IMR-90 (cell line): ENCODE measurements at regions of chr1 and their contacts with region 1.

Region 1: GRCh38 chr1:111553196-111553595 is 49.8 kb upstream of the ADORA3 start:
- DNase-seq: peak; percentile 89
- ATAC-seq: peak; percentile 81
- H3K4me3 ChIP-seq: no peak overlapping the region
- H3K27ac ChIP-seq: no peak overlapping the region
- H3K4me1 ChIP-seq: no peaks in the 10 kb centered on the region; the same call in 1 of the 2 replicates
- H3K27me3 ChIP-seq: no peaks in the 10 kb centered on the region
- CTCF ChIP-seq: no peak
- POLR2A ChIP-seq: no peak
- RAD21 ChIP-seq: no peak

Region 2: DNA sequence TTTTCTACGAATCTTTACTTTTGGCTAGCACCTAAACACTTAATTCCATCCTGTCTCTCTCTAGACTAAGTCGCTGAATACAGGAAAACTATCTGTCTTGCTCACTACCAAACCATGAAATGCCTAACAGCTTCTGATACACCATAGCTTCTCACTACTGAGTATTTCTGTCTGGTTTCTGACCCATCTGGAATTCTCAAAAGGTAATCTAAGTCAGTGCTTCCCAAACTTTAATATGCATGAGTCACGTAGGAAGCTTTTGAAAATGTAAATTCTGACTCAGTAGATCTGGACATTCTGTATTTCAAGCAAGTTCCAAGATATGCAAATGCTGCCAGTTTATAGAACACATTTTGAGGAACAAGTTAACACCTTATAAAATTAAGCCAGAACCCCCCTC is 116.5 kb before region 1 on chr1:
- CTCF ChIA-PET with region 1: no interaction called
- POLR2A ChIA-PET with region 1: no interaction called
- dilution Hi-C with region 1: no loop called
- in situ Hi-C with region 1: no loop called
- intact Hi-C with region 1: no loop called
- DNase-seq: peak; percentile 83
- ATAC-seq: peak; percentile 84
- H3K4me3 ChIP-seq: no peak overlapping the region
- H3K27ac ChIP-seq: peak overlapping the region; percentile 47; the same call in 1 of the 2 replicates
- H3K4me1 ChIP-seq: peaks cover 5% of the 10 kb centered on the region
- H3K27me3 ChIP-seq: no peaks in the 10 kb centered on the region
- CTCF ChIP-seq: no peak
- POLR2A ChIP-seq: no peak
- RAD21 ChIP-seq: no peak

Region 3: DNA sequence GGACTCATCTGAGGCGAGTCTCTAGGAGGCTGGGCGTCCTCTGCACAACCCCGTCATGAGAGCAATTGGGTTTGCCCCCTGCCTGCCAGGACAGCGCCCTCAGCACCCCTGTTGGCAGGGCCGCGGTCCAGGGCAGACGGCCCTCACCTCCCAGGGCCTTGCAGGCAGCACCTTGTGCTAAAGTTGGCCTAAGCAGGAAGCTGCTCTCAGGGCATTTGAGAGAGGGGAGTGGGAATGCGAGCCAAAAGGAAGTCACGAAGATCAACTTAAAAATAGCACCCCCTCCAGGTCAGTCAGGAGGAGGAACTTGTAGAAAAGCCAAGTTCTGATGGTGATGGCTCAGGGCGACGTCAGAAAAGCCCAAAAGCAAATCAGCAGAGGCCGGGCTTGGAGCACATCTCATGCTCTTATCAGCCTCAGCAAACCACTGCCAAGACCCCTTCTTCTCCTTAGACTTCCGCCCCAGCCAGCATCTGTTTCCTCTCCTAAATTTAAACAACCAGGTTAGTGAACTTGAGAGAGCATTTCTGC is 37.1 kb before region 1 on chr1:
- CTCF ChIA-PET with region 1: no interaction called
- POLR2A ChIA-PET with region 1: no interaction called
- dilution Hi-C with region 1: no loop called
- in situ Hi-C with region 1: no loop called
- intact Hi-C with region 1: loop called (anchors 5 kb)
- DNase-seq: peak; percentile 82
- ATAC-seq: peak; percentile 57
- H3K4me3 ChIP-seq: peak overlapping the region; percentile 18; the same call in 1 of the 2 replicates
- H3K27ac ChIP-seq: no peak overlapping the region; the same call in 1 of the 2 replicates
- H3K4me1 ChIP-seq: peaks cover 7% of the 10 kb centered on the region
- H3K27me3 ChIP-seq: no peaks in the 10 kb centered on the region
- CTCF ChIP-seq: peak; percentile 33
- POLR2A ChIP-seq: no peak
- RAD21 ChIP-seq: no peak

Region 4: DNA sequence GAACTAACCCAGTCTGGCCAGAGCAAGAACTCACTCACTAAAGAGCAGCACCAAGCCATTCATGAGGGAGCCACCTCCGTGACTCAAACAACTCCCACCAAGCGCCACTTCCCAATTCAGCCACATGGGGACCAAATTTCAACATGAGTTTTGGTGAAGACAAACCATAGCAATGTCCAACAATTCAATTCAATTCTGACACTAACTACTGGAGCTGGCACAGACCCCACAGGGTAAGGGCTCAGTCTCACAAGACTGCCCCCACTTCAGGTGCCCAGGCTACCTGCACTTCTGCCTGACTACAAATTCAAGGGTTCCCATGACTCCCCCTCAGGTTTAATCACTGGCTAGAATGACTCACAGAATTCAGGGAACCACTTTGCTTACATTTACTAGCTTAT is 17.6 kb after region 1 on chr1:
- CTCF ChIA-PET with region 1: no interaction called
- POLR2A ChIA-PET with region 1: no interaction called
- dilution Hi-C with region 1: no loop called
- in situ Hi-C with region 1: no loop called
- intact Hi-C with region 1: no loop called
- DNase-seq: peak; percentile 35
- ATAC-seq: no peak
- H3K4me3 ChIP-seq: no peak overlapping the region
- H3K27ac ChIP-seq: no peak overlapping the region
- H3K4me1 ChIP-seq: peaks cover 18% of the 10 kb centered on the region
- H3K27me3 ChIP-seq: no peaks in the 10 kb centered on the region
- CTCF ChIP-seq: peak; percentile 21; the same call in 1 of the 2 replicates
- POLR2A ChIP-seq: no peak
- RAD21 ChIP-seq: no peak

Region 5: DNA sequence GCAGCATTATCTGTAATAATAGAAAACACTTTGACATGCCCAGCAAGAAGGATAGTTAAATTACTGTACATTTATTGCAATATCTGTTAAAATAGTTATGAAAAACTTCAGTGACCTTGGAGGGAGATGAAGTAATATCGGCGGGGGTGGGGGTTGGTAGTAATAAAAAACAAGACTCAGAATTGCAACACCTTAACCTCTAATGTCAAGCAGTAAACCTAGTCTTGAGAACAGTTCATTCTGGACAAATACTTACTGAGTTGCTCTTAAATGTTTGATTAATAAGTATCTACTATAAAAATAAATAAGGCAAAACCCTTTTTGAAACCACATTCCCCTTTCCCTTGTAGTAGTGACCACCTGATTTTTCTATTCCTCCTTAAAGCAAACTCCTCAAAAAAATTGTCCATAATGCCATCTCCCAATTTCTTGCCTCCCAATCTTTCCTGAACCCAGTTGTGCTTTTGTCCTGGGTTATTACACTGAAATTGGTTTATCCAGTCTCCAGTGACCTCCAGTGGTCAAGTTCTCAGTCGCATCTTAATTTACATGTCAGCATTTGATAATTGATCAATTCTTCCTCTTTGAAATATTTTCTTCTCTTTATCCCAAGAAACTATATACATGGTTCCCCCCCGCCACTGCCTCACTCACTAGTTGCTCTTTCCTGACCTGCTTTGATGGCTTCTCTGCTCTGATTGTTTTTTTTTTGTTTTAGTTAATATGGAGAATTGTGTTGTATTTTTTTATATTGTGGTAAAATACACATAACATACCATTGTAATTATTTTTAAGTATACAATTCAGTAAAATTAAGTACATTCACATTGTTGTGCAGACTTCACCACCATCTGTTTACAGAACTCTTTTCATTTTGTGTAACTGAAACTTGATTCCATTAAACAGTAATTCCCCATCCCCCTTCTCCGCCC is 103.2 kb after region 1 on chr1:
- CTCF ChIA-PET with region 1: no interaction called
- POLR2A ChIA-PET with region 1: no interaction called
- dilution Hi-C with region 1: no loop called
- in situ Hi-C with region 1: no loop called
- intact Hi-C with region 1: no loop called
- DNase-seq: peak; percentile 66
- ATAC-seq: peak; percentile 72
- H3K4me3 ChIP-seq: no peak overlapping the region
- H3K27ac ChIP-seq: no peak overlapping the region
- H3K4me1 ChIP-seq: peaks cover 8% of the 10 kb centered on the region
- H3K27me3 ChIP-seq: no peaks in the 10 kb centered on the region
- CTCF ChIP-seq: peak; percentile 72
- POLR2A ChIP-seq: 0 out of 2 replicates have a peak, but pooled peaks have one; percentile 19
- RAD21 ChIP-seq: peak; percentile 86